ENCODE measurements at regions of chr2 and their contacts with region 1.

Region 1: DNA sequence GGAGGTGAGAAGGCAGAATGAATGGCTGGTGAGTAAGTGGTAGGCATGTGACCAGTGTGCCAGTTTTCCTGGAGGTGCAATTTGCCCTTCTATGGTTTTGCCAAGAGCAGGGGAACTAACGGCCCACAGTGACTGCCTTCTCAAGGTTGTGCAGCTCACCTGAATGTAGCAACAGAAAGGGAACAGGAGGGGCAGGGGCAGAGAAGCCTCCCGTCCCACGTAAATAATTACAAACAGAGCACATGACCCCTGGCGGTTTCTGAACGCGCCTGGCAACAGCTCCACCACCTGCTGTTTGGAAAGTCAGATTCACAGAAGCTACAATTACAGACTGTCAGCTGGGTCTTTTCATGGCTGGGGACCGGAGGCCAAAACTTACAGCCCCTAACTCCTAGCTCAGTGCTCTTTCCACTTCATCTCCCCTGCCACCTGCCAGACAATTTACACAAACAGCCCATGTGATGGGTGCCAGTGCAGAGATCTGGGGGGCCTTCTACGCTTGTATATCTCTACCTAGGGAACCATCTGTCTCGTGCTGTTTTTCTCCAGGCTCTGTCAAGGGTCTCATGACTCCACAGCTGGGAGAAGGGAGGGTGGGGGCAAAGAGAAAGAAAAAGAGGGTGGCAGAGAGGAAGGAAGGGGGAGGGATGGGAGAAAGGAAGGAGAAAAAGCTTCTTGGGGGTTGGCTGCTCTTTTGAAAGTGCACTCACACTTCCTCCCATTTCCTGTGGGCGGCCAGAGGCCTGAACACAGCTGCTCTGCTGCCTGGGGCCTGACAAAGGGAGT is 69.6 kb downstream of the POLR1A start:
- DNase-seq: peak; percentile 47 to 91 (median 68)
- ATAC-seq: peak; percentile 53
- H3K4me3 ChIP-seq: peak overlapping the region; percentile 29
- H3K4me3 Mint-ChIP-seq: peak overlapping the region; percentile 78
- H3K27ac ChIP-seq: peak overlapping the region; percentile 88 to 92
- H3K27ac Mint-ChIP-seq: peak overlapping the region; percentile 97
- H3K4me1 ChIP-seq: peaks cover 92% of the 10 kb centered on the region
- H3K4me1 Mint-ChIP-seq: peaks cover 72% of the 10 kb centered on the region
- H3K27me3 ChIP-seq: no peaks in the 10 kb centered on the region
- H3K27me3 Mint-ChIP-seq: peaks cover 3% of the 10 kb centered on the region
- CTCF ChIP-seq: peak; percentile 46

Region 2: GRCh38 chr2:85826990-85827878 is 208.8 kb before region 1 on chr2:
- CTCF ChIA-PET with region 1: interaction called, 19 read pairs
- POLR2A ChIA-PET with region 1: interaction called, 13 read pairs
- intact Hi-C with region 1: loop called (anchors 2 kb)
- DNase-seq: peak; percentile 74 to 90 (median 81)
- ATAC-seq: peak; percentile 100
- H3K4me3 ChIP-seq: no peak overlapping the region
- H3K4me3 Mint-ChIP-seq: no peak overlapping the region
- H3K27ac ChIP-seq: peak overlapping the region in 1 of 2 donors; percentile 5
- H3K27ac Mint-ChIP-seq: peak overlapping the region; percentile 49
- H3K4me1 ChIP-seq: peaks cover 10% of the 10 kb centered on the region
- H3K4me1 Mint-ChIP-seq: peaks cover 22% of the 10 kb centered on the region
- H3K27me3 ChIP-seq: no peaks in the 10 kb centered on the region
- H3K27me3 Mint-ChIP-seq: peaks cover 3% of the 10 kb centered on the region
- CTCF ChIP-seq: peak; percentile 92

Region 3: DNA sequence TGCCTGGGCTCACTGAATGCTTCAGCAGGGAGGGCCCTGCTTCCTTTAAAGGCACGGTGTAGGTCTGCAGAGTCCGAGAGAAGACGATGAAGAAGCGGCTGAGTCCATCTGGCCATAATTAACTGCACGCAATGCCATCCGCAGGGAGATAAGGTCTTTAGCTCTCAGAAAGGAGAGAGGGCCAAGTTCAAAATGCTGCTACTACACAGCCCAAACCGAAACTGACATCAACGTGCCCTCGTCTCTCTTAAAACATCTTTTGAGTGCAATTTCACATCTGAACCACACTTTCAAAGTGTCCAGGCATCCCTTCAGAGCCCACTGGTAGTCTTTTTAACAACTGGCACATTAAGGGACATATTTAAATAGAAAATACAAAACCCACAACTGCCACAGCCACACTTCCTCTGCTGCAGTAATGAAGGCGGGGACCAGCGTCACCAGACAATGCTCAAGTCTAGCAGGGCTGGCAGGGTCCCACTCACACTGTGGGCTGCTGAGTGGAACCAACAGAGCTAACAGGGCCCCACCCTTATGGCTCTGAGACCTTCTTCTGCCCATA is 183.1 kb before region 1 on chr2:
- CTCF ChIA-PET with region 1: no interaction called
- POLR2A ChIA-PET with region 1: interaction called, 28 read pairs
- intact Hi-C with region 1: loop called (anchors 1 to 5 kb)
- DNase-seq: peak; percentile 55 to 90 (median 70)
- ATAC-seq: peak; percentile 88
- H3K4me3 ChIP-seq: peak overlapping the region; percentile 56
- H3K4me3 Mint-ChIP-seq: peak overlapping the region; percentile 83
- H3K27ac ChIP-seq: peak overlapping the region; percentile 92 to 96
- H3K27ac Mint-ChIP-seq: peak overlapping the region; percentile 100
- H3K4me1 ChIP-seq: peaks cover 52% of the 10 kb centered on the region
- H3K4me1 Mint-ChIP-seq: peaks cover 74% of the 10 kb centered on the region
- H3K27me3 ChIP-seq: no peaks in the 10 kb centered on the region
- H3K27me3 Mint-ChIP-seq: no peaks in the 10 kb centered on the region
- CTCF ChIP-seq: no peak

Region 4: GRCh38 chr2:85999061-85999831 is 36.8 kb before region 1 on chr2:
- CTCF ChIA-PET with region 1: no interaction called
- POLR2A ChIA-PET with region 1: interaction called, 6 read pairs
- intact Hi-C with region 1: loop called in 1 of 2 experiments (anchors 5 kb)
- DNase-seq: peak in 13 of 14 experiments; percentile 16 to 66 (median 38)
- ATAC-seq: peak; percentile 89
- H3K4me3 ChIP-seq: no peak overlapping the region
- H3K4me3 Mint-ChIP-seq: no peak overlapping the region
- H3K27ac ChIP-seq: peak overlapping the region; percentile 53 to 60
- H3K27ac Mint-ChIP-seq: peak overlapping the region; percentile 83
- H3K4me1 ChIP-seq: peaks cover 66% of the 10 kb centered on the region
- H3K4me1 Mint-ChIP-seq: peaks cover 52% of the 10 kb centered on the region
- H3K27me3 ChIP-seq: no peaks in the 10 kb centered on the region
- H3K27me3 Mint-ChIP-seq: no peaks in the 10 kb centered on the region
- CTCF ChIP-seq: no peak

Region 5: DNA sequence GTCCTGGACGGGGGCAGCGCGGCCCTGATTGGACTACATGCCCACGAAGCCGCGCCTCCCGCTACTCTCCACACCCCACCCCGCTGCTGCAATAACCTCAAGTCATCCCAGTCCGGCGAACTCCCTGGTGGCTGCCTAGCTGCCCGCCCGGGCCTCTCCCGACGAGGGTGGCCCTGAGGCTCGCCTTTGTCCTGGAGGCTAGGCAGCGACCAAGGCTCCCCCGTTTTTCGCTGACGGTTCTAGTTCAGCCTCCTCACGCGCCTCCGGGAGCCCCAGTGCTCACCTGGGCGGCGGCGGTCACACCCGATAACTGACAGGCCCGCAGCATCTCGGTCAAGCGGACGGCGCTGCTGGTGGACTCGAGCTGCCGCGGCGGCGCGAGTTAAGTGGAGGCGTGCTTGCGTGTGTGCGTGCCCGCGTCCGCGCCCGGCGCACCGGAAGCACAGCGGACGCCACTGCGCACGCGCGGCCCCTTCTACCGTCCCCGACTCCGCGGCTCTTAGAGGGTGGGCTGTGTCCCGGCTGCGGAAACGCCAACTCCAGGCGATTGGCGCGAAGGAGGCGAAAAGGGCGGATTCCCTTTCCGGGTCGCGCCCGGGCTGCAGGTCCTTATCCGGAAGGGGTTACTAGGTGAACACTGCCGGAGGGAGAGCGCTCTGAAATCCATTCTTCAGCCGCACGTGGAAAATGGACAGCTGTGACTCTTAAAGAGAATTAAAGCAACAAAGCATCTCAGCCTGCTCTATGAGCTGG is 159.2 kb after region 1 on chr2 and contains the start of gene IMMT:
- CTCF ChIA-PET with region 1: no interaction called
- POLR2A ChIA-PET with region 1: no interaction called
- intact Hi-C with region 1: loop called in 1 of 2 experiments (anchors 5 kb)
- DNase-seq: peak; percentile 84 to 97 (median 90)
- ATAC-seq: peak; percentile 89
- H3K4me3 ChIP-seq: peak within 1 kb of the TSS; percentile 87
- H3K4me3 Mint-ChIP-seq: peak within 1 kb of the TSS; percentile 89
- H3K27ac ChIP-seq: peak within 1 kb of the TSS; percentile 96 to 98
- H3K27ac Mint-ChIP-seq: peak within 1 kb of the TSS; percentile 85
- H3K4me1 ChIP-seq: peaks cover 45% of the 10 kb centered on the region
- H3K4me1 Mint-ChIP-seq: peaks cover 71% of the 10 kb centered on the region
- H3K27me3 ChIP-seq: no peaks in the 10 kb centered on the region
- H3K27me3 Mint-ChIP-seq: no peaks in the 10 kb centered on the region
- CTCF ChIP-seq: no peak
- total RNA-seq, gene IMMT: 39.5 to 40.8 TPM

Measured in CD4-positive, alpha-beta T cell (primary cell).